Left cardiac atrium (tissue), 4 donors: ENCODE measurements at regions of chr20 and their contacts with region 1.

Region 1: DNA sequence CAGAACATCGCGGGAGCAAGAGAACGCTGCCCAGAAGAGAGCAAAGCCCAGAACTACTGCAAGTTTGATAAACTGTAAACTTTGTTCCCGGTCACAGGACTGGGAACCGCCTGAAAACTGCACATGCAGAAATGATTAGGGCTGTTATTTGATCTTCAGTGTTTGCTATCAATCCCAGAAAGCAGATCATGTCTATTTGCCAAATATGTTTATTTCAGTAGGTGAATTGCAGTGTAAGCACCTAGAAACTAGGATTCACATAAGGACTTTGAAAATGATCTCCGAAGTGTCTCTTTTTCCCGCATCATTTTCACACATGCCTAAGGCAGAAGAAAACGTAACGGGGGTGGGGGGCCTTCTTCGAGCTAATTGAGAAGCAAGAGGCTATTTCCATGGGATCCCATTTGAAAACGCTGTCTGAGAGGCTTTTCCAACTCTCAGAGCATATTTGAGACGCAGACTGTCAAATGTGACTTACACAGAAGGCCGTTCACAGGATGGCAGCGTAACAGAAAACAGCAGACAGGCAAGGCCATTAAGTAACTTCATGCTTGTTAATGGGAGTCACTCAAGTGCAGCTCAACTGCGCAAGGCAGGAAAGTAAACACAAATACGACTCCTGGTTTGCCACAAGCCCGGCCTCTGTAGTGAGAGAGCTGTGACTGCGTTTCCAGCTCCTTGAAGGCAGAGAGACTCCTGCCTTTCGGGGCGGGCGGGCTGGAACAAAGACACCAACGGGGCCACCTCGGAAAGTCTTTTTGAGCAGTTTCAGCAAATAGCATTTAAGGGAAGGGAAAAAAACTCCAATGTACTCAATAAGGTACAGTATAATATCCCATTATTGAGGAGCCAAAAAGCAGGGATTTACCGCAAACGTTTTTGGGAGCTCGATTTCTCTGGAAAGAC is 144.7 kb upstream of the ZNF217 start:
- DNase-seq: peak; percentile 58
- ATAC-seq: peak; percentile 80 to 86

Region 2: GRCh38 chr20:53623454-53624211 is 114.7 kb before region 1 on chr20:
- intact Hi-C with region 1: loop called in 1 of 2 experiments (anchors 10 kb)
- DNase-seq: peak; percentile 74
- ATAC-seq: peak; percentile 90

Region 3: DNA sequence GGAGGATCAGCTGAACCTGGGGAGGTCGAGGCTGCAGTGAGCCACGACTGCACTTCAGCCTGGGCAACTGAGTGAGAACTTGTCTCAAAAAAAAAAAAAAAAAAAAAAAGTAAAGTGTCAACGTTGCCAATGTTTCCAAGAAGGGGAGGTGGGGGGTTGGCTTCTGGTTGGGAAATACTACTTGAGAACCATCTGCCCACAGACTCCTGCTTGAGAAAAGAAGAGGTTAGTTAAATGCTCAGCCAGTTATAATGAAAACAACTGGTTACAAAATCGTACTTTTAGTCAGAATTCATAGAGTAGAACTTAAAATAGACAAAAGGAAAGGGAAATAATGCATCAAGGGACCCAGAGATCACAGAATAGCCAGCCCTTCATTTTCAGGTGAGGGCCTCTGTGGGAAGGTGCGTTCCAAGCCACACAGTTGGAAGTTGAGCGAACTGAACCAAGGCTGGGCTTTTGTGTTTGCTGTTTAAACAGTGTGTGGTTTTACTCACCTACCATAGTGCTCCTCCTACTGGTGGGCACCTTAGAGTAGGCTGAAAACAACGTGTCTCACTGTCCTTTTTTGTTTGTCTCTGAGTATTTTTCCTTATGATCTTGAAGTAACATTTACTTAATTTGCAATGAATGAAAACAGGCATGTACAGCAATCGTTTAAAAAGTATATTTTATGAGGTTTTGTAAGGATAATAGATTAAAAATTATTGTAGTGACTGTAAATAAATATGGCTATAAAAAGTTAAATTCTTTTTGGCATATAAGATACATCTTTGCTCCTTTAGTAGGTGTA is 131.4 kb after region 1 on chr20:
- intact Hi-C with region 1: no loop called
- DNase-seq: peak; percentile 56
- ATAC-seq: peak; percentile 88 to 90